ENCODE measurements at regions of chr1 and their contacts with region 1.

Region 1: DNA sequence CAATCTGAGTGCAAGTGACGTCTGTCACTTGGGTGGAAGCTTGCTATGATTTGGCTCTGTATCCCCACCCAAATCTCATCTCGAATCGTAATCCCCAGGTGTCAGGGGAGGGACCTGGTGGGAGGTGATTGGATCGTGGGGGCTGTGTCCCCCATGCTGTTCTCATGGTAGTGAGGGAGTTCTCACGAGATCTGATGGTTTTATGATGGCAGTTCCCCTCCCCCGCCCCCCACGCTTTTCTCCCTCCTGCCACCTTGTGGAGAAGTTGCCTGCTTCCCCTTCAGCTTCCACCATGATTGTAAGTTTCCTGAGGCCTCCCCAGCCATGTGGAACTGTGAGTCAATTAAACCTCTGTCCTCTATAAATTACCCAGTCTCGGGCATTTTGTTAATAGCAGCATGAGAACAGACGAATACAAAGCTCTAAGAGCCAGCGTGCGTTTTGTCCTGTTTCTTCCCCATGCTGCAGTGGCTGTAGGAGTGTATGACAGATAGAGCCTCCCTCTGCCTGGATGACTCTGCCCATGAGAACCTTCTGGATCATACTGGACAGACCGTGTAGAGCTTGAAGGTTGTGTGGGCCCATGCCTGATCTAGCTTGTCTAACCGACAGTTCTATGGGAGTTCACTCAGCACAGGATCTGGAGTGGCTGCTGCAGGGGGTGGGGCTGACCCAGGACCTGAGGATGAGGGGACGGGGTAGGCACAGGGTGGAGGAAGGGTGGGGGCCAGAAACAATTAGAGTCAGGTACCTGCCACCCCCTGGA is 139.7 kb upstream of the ERRFI1 start:
- DNase-seq: no peak
- H3K4me3 ChIP-seq: no peak overlapping the region; a peak in 1 of 8 replicates
- H3K27ac ChIP-seq: peak overlapping the region; percentile 75; the same call in 1 of the 2 replicates
- H3K4me1 ChIP-seq: peaks cover 12 to 18% (median 15%) of the 10 kb centered on the region in 4 experiments
- H3K27me3 ChIP-seq: no peaks in the 10 kb centered on the region
- CTCF ChIP-seq: peak; percentile 44 to 55 (median 46)
- EP300 ChIP-seq: no peak
- POLR2A ChIP-seq: no peak
- RAD21 ChIP-seq: peak; percentile 35 to 54; a peak in 3 of 4 replicates

Region 2: DNA sequence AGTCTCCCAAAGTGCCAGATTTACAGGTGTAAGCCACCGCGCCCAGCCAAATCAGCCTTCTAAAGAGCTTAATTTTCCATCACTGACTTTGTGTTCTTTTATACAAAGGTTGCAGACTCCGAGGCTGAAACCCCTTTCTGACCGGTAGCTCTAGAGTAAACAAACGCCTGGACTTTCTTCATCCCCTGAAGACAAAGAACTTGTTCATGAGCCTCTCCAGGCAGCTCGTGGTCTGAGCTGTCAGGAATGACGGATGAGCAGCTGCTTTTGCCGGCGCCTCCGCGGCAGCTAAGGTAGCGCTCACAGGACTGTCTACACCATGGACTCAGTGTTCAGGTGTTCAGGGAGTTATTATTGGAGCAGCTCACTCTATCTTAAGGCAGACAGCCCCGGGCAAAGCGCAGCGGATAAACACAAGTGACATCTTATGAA is 11.1 kb before region 1 on chr1:
- CTCF ChIA-PET with region 1: interaction called, 11 read pairs
- POLR2A ChIA-PET with region 1: interaction called, 5 read pairs
- DNase-seq: no peak
- H3K4me3 ChIP-seq: no peak overlapping the region
- H3K27ac ChIP-seq: no peak overlapping the region
- H3K4me1 ChIP-seq: peaks cover 0 to 2% (median 0%) of the 10 kb centered on the region in 4 experiments; a peak in 3 of 7 replicates
- H3K27me3 ChIP-seq: no peaks in the 10 kb centered on the region
- CTCF ChIP-seq: no peak
- EP300 ChIP-seq: no peak
- POLR2A ChIP-seq: no peak
- RAD21 ChIP-seq: no peak

Region 3: DNA sequence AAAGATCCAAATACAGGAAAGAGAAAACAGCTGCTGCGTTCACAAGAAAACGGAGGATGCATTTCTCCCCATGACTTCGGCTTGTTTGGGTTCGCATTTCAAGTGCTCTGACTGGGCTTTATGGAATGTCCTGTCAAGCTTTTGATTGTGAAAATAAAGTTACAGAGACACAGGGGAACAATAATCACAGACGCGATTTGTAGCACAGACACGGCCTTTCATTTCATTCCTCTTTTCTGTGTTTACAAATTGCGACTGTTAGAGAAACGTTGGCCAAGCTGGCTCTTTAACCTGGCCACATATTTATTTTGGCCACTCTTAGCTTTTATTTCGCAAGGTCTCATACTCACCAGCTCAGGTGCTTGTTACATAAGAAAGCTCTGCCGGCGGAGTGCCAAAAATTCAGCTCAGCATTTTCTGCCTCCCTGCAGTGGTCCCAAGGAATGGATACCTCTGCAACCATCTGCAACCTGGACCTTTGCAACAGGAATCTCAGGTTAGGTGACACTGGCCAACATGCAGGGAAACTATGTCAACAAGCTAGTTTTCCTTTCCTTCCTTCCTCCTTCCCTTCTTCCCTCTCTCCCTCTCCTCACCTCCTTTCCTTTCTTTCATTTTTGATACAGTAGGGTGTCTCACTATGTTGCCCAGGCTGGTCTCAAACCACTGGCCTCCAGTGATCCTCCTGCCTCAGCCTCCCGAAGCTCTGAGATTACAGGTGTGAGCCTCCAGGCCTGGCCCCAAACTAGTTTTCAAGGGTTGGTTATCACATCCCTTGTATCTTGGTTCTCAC is 93.9 kb after region 1 on chr1:
- CTCF ChIA-PET with region 1: interaction called, 10 read pairs
- POLR2A ChIA-PET with region 1: no interaction called
- DNase-seq: no peak
- H3K4me3 ChIP-seq: no peak overlapping the region
- H3K27ac ChIP-seq: no peak overlapping the region
- H3K4me1 ChIP-seq: peaks cover 3 to 10% (median 4%) of the 10 kb centered on the region in 4 experiments
- H3K27me3 ChIP-seq: no peaks in the 10 kb centered on the region
- CTCF ChIP-seq: no peak
- EP300 ChIP-seq: no peak
- POLR2A ChIP-seq: no peak
- RAD21 ChIP-seq: no peak

Measured in H1 (cell line).